Activated naive CD4-positive, alpha-beta T cell treated with anti-CD3 and anti-CD28 coated beads for 36 hours (primary cell): ENCODE measurements at regions of chr5 and their contacts with region 1.

Region 1: DNA sequence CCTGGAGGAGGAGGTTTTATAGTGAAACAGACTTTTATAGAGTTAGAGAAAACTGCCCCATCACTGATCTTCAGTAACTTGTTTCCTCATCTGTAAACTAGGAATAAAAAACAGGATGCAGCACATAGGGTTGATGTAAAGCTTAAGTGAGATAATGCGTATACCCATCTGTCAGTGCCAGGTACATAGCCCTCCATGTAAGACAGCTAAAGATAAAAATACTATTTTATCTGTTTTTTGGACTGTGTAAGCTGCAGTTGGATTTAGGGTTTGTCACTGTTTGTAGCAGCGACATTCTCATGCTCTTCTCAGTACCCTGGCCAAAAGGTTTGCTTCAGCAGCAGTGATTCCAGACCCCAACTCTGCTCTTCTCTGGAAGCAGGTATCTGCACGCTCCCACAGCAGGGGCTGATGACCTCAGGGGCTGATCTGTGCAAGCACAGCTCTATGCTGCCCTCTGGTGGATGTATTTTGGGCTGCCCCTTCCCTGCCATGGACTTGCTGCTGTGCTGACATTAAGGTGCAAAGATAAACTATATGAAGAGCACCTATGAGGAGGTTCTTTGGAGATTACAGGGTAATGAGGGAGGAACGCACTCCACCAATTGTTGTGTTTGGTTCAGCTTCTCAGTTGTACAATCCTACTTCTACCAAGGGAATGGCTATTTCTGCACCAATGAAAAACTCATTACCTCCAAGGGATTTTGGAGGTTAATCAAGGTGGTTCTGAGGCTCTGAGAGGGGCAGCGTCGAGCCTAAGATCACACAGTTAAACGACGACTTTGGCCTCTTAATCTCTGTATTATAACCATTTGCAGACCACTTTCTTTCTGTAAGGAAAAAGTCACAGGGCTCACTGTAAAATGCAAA is 13.1 kb downstream of the HMHB1 start:
- DNase-seq: peak; percentile 90
- H3K4me3 Mint-ChIP-seq: no peak overlapping the region
- H3K27ac Mint-ChIP-seq: no peak overlapping the region
- H3K4me1 Mint-ChIP-seq: peaks cover 17% of the 10 kb centered on the region
- H3K27me3 Mint-ChIP-seq: no peaks in the 10 kb centered on the region

Region 2: DNA sequence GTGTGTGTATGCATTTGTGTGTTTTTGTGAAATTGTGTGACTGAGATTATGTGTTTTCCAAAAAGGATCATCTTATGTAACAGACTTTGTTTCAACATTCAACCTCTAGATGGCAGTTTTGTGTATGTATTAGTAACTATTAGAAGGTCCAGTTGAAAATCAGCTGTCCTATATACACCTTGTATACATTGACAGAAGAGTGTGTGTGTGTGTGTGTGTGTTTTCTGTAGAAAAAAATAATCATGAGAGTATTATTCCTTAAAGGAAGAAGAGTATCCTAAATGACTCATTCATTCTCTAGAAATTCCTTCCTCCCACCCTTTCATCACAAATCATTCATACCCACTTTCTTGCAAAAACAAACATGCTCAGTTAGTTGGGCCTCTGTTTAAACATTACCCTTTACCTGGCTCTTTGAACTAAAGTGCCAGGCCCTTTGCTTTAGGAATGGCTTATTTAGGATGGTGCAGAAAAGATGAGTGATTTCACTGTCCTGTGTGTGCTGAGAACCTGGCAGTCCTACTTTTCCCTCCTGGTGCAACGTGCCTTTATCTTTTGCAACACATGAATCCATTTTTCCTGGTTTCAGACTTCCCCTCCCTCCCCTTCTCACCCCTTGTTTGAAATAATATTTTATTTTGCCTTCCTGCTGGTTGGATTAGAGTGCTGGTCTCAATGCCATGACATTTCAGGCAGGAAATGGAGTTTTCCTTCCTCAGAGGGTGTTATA is 902.7 kb before region 1 on chr5:
- CTCF ChIA-PET with region 1: interaction called, 3 read pairs
- intact Hi-C with region 1: loop called (anchors 1 kb)
- DNase-seq: no peak
- H3K4me3 Mint-ChIP-seq: no peak overlapping the region
- H3K27ac Mint-ChIP-seq: no peak overlapping the region
- H3K4me1 Mint-ChIP-seq: peaks cover 13% of the 10 kb centered on the region
- H3K27me3 Mint-ChIP-seq: no peaks in the 10 kb centered on the region

Region 3: DNA sequence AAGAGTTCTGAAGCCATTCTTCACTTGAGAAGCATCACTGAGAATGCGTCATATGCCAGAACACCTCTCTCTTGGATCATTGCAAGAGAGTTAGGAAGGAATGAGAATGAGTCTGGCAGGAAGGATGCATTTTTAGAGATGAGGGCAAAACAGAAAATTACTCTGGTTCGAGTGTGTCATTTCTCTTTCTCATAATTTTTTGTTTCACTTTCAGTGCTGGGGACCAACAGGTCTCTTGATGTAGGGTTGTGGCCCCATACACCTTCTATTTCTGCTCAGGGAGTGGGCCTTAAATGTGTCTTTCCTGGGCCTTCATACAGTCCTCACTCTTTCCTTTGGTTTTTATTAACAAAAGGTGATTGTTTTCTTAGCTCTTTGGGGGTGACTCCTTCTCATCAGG is 724.0 kb before region 1 on chr5:
- CTCF ChIA-PET with region 1: no interaction called
- intact Hi-C with region 1: loop called (anchors 5 kb)
- DNase-seq: peak; percentile 22
- H3K4me3 Mint-ChIP-seq: peak overlapping the region; percentile 31
- H3K27ac Mint-ChIP-seq: peak overlapping the region; percentile 81
- H3K4me1 Mint-ChIP-seq: peaks cover 25% of the 10 kb centered on the region
- H3K27me3 Mint-ChIP-seq: no peaks in the 10 kb centered on the region

Region 4: DNA sequence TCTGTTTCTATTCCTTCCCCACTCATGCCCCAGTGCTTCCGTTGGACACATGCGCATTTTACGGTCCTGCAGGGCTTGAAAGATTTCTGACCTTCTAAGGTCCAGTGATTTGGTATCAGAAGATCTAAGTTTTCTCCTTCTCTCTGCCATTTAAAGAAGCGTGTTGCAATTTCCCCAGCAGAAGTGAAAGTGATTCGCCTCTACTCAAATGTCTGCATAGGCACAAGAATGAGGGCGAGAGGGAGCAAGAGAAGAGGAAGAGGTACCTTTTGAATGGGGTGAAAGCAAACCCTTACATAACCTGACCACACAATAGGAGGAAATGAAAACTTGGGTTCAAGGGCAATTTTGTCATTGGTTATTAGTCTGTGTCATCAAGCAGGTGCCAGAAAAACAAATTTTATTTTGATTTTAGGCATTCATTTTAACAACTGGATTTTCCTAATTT is 389.9 kb before region 1 on chr5:
- CTCF ChIA-PET with region 1: interaction called, 3 read pairs
- intact Hi-C with region 1: loop called (anchors 5 kb)
- DNase-seq: peak; percentile 61
- H3K4me3 Mint-ChIP-seq: peak overlapping the region; percentile 83
- H3K27ac Mint-ChIP-seq: peak overlapping the region; percentile 97
- H3K4me1 Mint-ChIP-seq: peaks cover 68% of the 10 kb centered on the region
- H3K27me3 Mint-ChIP-seq: no peaks in the 10 kb centered on the region

Region 5: GRCh38 chr5:143968011-143968878 is 143.2 kb after region 1 on chr5:
- CTCF ChIA-PET with region 1: interaction called, 3 read pairs
- intact Hi-C with region 1: loop called (anchors 2 kb)
- DNase-seq: peak; percentile 6
- H3K4me3 Mint-ChIP-seq: no peak overlapping the region
- H3K27ac Mint-ChIP-seq: no peak overlapping the region
- H3K4me1 Mint-ChIP-seq: no peaks in the 10 kb centered on the region
- H3K27me3 Mint-ChIP-seq: peaks cover 16% of the 10 kb centered on the region

Region 6: DNA sequence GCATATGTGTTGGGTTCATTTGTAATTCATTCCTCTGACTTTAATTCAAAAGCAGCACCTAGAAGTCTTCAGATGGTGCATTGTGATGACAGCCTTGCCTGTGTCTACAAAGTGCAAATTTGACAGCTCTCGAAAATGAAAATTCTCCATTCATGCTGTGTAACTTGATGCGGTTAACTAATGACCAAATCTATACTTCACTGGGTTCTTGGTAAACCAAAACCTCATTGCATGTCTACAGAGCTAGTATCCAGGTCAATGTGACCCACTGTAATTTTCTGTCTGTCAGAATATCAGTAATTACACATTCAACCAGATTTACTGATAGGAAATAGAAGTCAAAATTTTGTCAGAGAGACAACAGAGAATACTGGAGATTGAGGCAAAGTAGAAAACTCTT is 279.0 kb after region 1 on chr5:
- CTCF ChIA-PET with region 1: no interaction called
- intact Hi-C with region 1: no loop called
- DNase-seq: no peak
- H3K4me3 Mint-ChIP-seq: no peak overlapping the region
- H3K27ac Mint-ChIP-seq: no peak overlapping the region
- H3K4me1 Mint-ChIP-seq: no peaks in the 10 kb centered on the region
- H3K27me3 Mint-ChIP-seq: no peaks in the 10 kb centered on the region

Region 7: GRCh38 chr5:144183254-144183889 is 358.3 kb after region 1 on chr5:
- CTCF ChIA-PET with region 1: interaction called, 3 read pairs
- intact Hi-C with region 1: loop called (anchors 1 kb)
- DNase-seq: no peak
- H3K4me3 Mint-ChIP-seq: no peak overlapping the region
- H3K27ac Mint-ChIP-seq: no peak overlapping the region
- H3K4me1 Mint-ChIP-seq: peaks cover 35% of the 10 kb centered on the region
- H3K27me3 Mint-ChIP-seq: no peaks in the 10 kb centered on the region